ENCODE measurements at regions of chr6 and their contacts with region 1.

Region 1: DNA sequence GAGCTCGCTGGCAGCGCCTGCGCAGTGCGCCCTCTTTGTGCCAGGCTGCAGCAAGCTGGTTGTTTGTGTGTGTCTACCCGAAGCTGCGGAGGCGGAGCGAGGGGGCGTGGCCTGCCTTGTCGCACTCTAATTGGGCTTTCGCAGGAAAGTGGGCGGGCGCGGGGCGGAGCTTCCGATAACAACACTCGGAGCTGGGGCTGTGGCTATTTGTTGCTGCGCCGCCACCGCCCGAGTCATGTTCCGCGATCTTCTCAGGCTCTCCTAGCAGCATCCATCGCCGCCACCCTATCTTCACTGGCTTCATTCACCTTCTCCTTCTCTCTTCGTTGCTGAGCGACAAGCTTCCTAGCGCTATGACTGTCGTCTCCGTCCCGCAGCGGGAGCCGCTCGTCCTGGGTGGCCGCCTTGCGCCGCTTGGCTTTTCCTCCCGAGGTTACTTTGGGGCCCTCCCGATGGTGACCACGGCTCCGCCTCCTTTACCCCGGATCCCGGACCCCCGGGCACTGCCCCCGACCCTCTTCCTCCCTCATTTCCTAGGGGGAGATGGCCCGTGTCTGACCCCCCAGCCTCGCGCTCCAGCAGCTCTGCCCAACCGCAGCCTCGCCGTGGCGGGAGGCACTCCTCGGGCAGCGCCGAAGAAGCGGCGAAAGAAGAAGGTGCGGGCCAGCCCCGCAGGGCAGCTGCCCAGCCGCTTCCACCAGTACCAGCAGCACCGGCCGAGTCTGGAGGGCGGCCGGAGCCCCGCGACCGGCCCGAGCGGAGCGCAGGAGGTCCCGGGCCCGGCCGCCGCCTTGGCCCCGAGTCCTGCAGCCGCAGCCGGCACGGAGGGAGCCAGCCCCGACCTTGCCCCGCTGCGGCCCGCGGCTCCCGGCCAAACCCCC is at the start of gene PNRC1:
- DNase-seq: peak; percentile 100
- ATAC-seq: peak; percentile 77
- H3K4me3 Mint-ChIP-seq: peak within 1 kb of the TSS; percentile 95
- H3K27ac Mint-ChIP-seq: peak within 1 kb of the TSS; percentile 99
- H3K4me1 Mint-ChIP-seq: peaks cover 39% of the 10 kb centered on the region
- H3K27me3 Mint-ChIP-seq: no peaks in the 10 kb centered on the region
- CTCF ChIP-seq: no peak
- total RNA-seq, gene PNRC1: 220 and 229 TPM in 2 replicates

Region 2: DNA sequence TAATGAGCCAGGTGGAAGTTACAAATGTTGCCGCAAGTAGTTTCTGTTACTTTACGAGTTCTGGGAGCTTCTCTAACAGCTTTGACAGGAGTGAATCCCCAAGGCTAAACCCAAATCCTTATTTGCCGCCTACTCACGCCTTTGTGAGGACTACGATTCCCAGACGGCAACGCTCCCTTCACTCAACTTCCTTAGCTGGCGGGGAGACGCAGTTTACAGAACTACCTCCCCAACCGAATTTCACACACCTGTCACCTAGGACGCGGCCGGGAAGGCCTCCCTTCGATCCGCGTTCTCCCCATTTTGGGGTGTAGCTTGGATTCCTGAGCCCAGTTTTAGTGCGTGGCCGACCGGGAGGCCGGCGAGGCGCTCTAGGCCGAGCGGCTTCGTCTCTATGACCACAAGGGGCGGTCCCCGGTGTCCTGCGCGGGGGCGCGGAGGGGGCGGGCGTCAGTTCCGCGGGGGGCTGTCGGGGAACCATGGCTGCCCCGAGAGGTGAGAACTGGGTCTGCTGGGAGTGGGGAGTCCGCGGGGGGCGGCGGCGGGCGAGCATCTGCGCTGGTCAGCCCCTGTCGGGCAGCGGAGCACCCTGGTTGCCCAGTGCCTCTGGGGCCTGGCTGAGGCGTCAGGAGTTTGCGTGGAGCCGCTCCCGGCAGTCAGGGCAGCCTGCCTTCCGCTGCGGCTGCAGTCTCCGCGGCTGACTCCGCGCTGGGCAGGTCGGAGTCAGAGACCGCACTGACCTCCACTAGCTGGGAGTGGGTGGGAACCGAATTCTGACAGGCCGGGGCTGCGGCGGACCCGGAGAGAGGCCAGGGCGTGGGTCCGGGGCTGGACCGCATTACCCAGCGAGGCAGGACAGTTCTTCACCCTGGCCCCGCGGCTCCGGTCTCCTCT is 1608.0 kb before region 1 on chr6 and contains the start of gene SLC35A1:
- CTCF ChIA-PET with region 1: no interaction called
- POLR2A ChIA-PET with region 1: no interaction called
- intact Hi-C with region 1: loop called (anchors 5 kb)
- DNase-seq: peak; percentile 88
- ATAC-seq: peak; percentile 97
- H3K4me3 Mint-ChIP-seq: peak within 1 kb of the TSS; percentile 97
- H3K27ac Mint-ChIP-seq: peak within 1 kb of the TSS; percentile 98
- H3K4me1 Mint-ChIP-seq: peaks cover 12% of the 10 kb centered on the region
- H3K27me3 Mint-ChIP-seq: peaks cover 6% of the 10 kb centered on the region
- CTCF ChIP-seq: no peak
- total RNA-seq, gene SLC35A1: 7.5 and 8.7 TPM in 2 replicates

Region 3: DNA sequence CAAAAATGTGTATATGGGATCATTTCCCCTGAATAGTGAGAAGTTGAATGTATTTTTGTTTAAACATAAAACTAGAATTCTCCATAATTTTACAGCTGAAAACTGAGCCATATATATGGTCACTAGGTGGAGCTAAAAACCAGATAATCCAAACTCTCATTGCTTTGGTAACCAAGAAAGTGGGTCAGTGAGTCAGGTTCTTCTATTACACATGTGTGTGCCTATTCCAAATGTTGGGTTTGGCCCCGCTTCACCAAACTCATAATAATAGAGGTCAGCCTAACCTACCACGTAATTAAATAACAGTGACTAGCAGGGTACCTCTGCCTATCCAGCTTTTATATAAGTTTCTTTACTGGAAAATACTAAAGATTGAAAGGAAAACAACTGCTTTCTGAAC is 98.1 kb before region 1 on chr6:
- CTCF ChIA-PET with region 1: interaction called, 12 read pairs
- POLR2A ChIA-PET with region 1: interaction called, 14 read pairs
- intact Hi-C with region 1: loop called (anchors 1 kb)
- DNase-seq: no peak
- ATAC-seq: peak; percentile 71
- H3K4me3 Mint-ChIP-seq: no peak overlapping the region
- H3K27ac Mint-ChIP-seq: no peak overlapping the region
- H3K4me1 Mint-ChIP-seq: no peaks in the 10 kb centered on the region
- H3K27me3 Mint-ChIP-seq: no peaks in the 10 kb centered on the region
- CTCF ChIP-seq: peak; percentile 87

Region 4: GRCh38 chr6:89242574-89243330 is 162.0 kb after region 1 on chr6:
- CTCF ChIA-PET with region 1: no interaction called
- POLR2A ChIA-PET with region 1: no interaction called
- intact Hi-C with region 1: loop called (anchors 2 kb)
- DNase-seq: no peak
- ATAC-seq: no peak
- H3K4me3 Mint-ChIP-seq: no peak overlapping the region
- H3K27ac Mint-ChIP-seq: no peak overlapping the region
- H3K4me1 Mint-ChIP-seq: peaks cover 13% of the 10 kb centered on the region
- H3K27me3 Mint-ChIP-seq: peaks cover 13% of the 10 kb centered on the region
- CTCF ChIP-seq: no peak

Region 5: DNA sequence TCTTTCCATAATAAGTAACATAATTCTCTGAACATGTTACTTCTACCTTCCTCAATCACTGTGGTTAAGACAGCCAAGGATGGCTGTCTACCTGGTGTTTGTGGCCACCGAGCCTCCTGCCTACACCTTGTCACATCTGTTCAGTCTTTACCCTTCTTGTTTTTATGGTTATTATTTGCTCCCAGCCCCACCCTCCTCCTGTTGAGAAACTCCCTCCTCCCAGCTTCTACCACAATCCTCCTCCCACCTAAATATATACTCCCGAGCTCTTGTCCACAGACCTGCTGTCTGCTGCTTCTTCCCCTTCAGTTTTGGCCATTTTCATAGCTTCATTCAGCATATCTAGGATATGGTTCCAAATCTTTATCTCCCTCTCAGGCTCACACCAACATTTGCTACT is 172.1 kb after region 1 on chr6:
- CTCF ChIA-PET with region 1: no interaction called
- POLR2A ChIA-PET with region 1: no interaction called
- intact Hi-C with region 1: no loop called
- DNase-seq: no peak
- ATAC-seq: no peak
- H3K4me3 Mint-ChIP-seq: no peak overlapping the region
- H3K27ac Mint-ChIP-seq: no peak overlapping the region
- H3K4me1 Mint-ChIP-seq: no peaks in the 10 kb centered on the region
- H3K27me3 Mint-ChIP-seq: peaks cover 2% of the 10 kb centered on the region
- CTCF ChIP-seq: no peak

Region 6: GRCh38 chr6:89412071-89413005 is 331.6 kb after region 1 on chr6 and contains the start of gene RRAGD:
- CTCF ChIA-PET with region 1: no interaction called
- POLR2A ChIA-PET with region 1: interaction called, 7 read pairs
- intact Hi-C with region 1: loop called (anchors 5 kb)
- DNase-seq: peak; percentile 56
- ATAC-seq: peak; percentile 72
- H3K4me3 Mint-ChIP-seq: peak within 1 kb of the TSS; percentile 92
- H3K27ac Mint-ChIP-seq: peak within 1 kb of the TSS; percentile 56
- H3K4me1 Mint-ChIP-seq: peaks cover 21% of the 10 kb centered on the region
- H3K27me3 Mint-ChIP-seq: peaks cover 14% of the 10 kb centered on the region
- CTCF ChIP-seq: no peak
- total RNA-seq, gene RRAGD: 5.4 and 5.6 TPM in 2 replicates

Region 7: DNA sequence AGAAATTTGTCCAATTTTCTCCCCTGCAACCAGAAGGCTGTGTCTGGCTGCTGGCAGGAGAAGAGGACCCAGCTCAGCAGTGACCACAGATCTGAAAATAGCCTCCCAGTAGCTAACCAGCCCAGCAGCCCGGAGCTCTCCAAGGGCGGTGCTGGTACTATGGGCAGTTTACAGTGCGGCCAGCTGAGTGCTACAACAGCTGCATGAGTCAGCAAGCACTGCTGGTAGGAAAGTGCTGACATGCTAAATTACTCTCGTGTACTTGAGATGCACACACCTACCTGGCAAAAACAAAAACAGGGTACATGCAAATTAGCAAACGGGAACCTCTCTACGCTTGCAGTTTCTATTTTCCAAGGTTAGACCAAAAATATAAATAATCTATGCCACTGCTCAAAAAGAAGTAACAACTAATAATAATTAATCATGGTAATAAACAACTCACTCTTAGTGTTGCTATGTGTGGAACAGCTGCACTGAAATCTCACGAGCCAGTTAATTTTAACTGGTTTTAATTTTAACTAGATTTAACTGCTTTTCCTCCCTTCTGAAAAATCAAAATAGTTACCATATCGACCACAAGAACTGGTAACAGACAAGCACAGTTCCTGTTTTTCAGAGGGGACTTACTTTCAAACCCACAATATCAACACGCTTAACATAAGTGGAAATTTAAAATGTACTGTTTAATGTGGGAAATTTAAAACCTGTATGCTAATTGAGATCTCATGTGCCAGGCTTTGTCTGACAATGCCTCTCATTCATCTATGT is 1205.0 kb after region 1 on chr6:
- CTCF ChIA-PET with region 1: no interaction called
- POLR2A ChIA-PET with region 1: no interaction called
- intact Hi-C with region 1: loop called (anchors 10 kb)
- DNase-seq: no peak
- ATAC-seq: peak; percentile 67
- H3K4me3 Mint-ChIP-seq: peak overlapping the region; percentile 77
- H3K27ac Mint-ChIP-seq: peak overlapping the region; percentile 88
- H3K4me1 Mint-ChIP-seq: peaks cover 92% of the 10 kb centered on the region
- H3K27me3 Mint-ChIP-seq: no peaks in the 10 kb centered on the region
- CTCF ChIP-seq: no peak

Measured in activated B cell treated with CpG ODN at 0.5 μM for 24 hours (primary cell).